MCF 10A (cell line): ENCODE measurements at regions of chr12 and their contacts with region 1.

Region 1: DNA sequence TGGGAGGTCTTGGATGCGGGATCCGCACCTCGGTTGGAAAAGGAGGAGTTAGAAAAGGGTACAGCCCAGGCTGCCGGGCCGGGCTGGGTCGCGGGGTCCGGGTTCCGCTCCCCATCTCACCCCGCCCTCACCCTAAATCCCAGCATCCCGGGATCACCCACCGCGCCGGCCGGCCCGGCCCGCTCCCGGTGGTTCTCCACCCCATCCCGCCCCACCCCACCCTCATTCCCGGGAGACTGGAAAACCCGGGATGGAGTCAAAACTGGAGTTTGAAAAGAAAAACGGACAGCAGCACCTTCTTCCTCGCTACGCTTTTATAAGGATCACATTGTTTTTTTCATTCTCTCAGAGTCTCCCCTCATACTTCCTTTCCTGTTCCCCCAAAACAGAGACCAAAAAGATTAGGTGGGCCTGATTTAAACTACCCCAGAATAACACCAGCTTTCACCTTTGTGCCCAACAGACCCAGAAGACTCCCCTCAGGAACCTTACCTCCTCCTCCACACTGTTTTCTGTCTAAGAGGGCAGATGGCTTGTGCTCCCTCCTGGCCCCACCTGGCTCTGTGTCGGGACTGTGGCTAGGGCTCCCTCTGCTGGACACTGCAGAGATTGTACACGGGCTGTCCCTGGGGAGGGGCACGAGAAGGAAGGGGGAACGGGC is 2.8 kb downstream of the GLI1 start:
- DNase-seq: peak; percentile 92
- H3K4me3 Mint-ChIP-seq: peak overlapping the region; percentile 70
- H3K27ac Mint-ChIP-seq: peak overlapping the region; percentile 67
- H3K4me1 Mint-ChIP-seq: peaks cover 25% of the 10 kb centered on the region
- H3K27me3 Mint-ChIP-seq: peaks cover 59% of the 10 kb centered on the region
- CTCF ChIP-seq: peak; percentile 93

Region 2: GRCh38 chr12:57261428-57261865 is 200.9 kb before region 1 on chr12:
- CTCF ChIA-PET with region 1: interaction called, 139 read pairs
- POLR2A ChIA-PET with region 1: interaction called, 4 read pairs
- intact Hi-C with region 1: no loop called
- DNase-seq: no peak
- H3K4me3 Mint-ChIP-seq: no peak overlapping the region
- H3K27ac Mint-ChIP-seq: no peak overlapping the region
- H3K4me1 Mint-ChIP-seq: no peaks in the 10 kb centered on the region
- H3K27me3 Mint-ChIP-seq: no peaks in the 10 kb centered on the region
- CTCF ChIP-seq: no peak

Region 3: GRCh38 chr12:57430931-57431720 is 31.3 kb before region 1 on chr12 and contains the start of gene R3HDM2:
- CTCF ChIA-PET with region 1: interaction called, 11 read pairs
- POLR2A ChIA-PET with region 1: no interaction called
- intact Hi-C with region 1: no loop called
- DNase-seq: peak; percentile 93
- H3K4me3 Mint-ChIP-seq: peak within 1 kb of the TSS; percentile 81
- H3K27ac Mint-ChIP-seq: peak within 1 kb of the TSS; percentile 95
- H3K4me1 Mint-ChIP-seq: peaks cover 6% of the 10 kb centered on the region
- H3K27me3 Mint-ChIP-seq: no peaks in the 10 kb centered on the region
- CTCF ChIP-seq: no peak
- total RNA-seq, gene R3HDM2: 53.9 and 64.8 TPM in 2 replicates

Region 4: DNA sequence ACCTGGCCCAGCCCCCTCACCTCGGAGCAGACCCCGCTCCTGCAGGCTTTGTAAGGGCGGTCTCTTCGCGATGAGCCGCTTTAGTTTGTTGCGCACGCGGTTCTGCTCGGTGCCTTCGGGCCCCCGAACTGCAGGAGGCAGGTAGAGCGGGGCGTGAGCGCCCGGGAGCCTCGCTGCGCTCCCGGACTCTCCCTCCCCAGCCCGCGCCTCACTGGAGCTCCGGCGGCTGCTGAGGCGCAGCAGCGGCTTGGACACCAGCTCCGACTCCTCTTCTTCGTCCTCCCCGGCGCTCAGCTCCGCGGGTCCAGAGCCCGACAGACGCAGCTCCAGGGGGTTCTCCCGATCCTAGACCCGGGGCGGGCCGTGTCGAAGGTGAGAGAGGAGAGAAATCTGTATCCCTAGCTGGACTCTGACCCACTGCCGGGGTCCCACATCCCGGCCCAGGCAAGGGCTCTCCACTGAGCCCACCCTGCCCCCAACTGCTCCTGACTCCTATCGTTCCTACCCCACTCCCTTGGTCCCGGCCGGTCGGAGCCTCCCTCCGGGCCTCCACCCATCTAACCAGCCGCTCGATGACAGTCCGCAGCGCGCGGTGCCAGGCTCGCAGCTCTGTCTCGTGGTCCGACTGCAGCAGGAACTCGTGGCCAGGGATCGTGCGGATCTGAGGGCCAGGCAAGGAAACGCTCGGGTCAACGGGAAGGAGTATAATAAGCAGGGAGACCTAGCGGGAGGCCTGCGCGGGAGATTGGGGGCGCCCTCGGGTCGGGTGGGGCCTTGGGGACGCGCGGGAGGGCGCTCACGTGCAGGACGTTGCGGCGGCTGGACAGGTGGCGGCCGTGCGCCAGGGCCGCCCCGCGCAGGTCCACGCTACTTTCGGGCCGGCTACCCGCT is 13.1 kb after region 1 on chr12:
- CTCF ChIA-PET with region 1: interaction called, 31 read pairs
- POLR2A ChIA-PET with region 1: interaction called, 3 read pairs
- intact Hi-C with region 1: no loop called
- DNase-seq: no peak
- H3K4me3 Mint-ChIP-seq: peak overlapping the region; percentile 31
- H3K27ac Mint-ChIP-seq: no peak overlapping the region
- H3K4me1 Mint-ChIP-seq: peaks cover 7% of the 10 kb centered on the region
- H3K27me3 Mint-ChIP-seq: peaks cover 87% of the 10 kb centered on the region
- CTCF ChIP-seq: no peak

Region 5: GRCh38 chr12:57621497-57622292 is 159.3 kb after region 1 on chr12:
- CTCF ChIA-PET with region 1: interaction called, 5 read pairs
- POLR2A ChIA-PET with region 1: no interaction called
- intact Hi-C with region 1: loop called (anchors 2 kb)
- DNase-seq: peak; percentile 35
- H3K4me3 Mint-ChIP-seq: peak overlapping the region; percentile 47
- H3K27ac Mint-ChIP-seq: no peak overlapping the region
- H3K4me1 Mint-ChIP-seq: peaks cover 5% of the 10 kb centered on the region
- H3K27me3 Mint-ChIP-seq: peaks cover 69% of the 10 kb centered on the region
- CTCF ChIP-seq: peak; percentile 90